ENCODE measurements at regions of chr14 and their contacts with region 1.

Region 1: DNA sequence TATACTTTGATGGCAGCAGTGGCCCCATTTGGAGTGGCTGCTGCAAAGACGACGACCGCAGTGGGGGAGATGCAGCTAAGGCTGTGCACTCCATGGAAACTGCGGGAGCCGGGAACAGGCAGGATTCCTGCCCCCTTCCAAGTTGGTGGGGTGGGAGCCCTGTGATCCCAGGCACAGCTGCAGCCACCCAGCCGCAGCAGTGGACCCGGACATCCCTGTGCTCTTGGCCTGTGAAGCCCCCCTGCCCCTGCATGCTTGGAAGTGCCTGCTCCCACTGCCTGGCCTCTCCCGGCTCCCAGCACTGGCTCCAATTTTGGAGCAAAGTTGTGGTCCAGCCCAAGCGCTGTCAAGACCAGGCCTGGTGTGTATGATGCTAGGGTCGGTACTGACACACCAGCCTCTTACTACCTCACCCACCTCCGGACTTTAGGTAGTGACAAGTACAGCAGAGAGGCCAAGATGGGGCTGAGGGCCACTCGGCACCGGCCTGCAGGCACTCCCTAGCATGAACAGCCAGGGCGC is 502.8 kb upstream of the RPL10L start:
- DNase-seq: no peak
- H3K4me3 Mint-ChIP-seq: no peak overlapping the region
- H3K27ac Mint-ChIP-seq: no peak overlapping the region
- H3K4me1 Mint-ChIP-seq: no peaks in the 10 kb centered on the region
- H3K27me3 Mint-ChIP-seq: peaks cover 27% of the 10 kb centered on the region
- CTCF ChIP-seq: no peak

Region 2: GRCh38 chr14:47120645-47121044 is 33.7 kb before region 1 on chr14:
- CTCF ChIA-PET with region 1: no interaction called
- POLR2A ChIA-PET with region 1: no interaction called
- intact Hi-C with region 1: no loop called
- DNase-seq: no peak
- H3K4me3 Mint-ChIP-seq: no peak overlapping the region
- H3K27ac Mint-ChIP-seq: no peak overlapping the region
- H3K4me1 Mint-ChIP-seq: no peaks in the 10 kb centered on the region
- H3K27me3 Mint-ChIP-seq: no peaks in the 10 kb centered on the region
- CTCF ChIP-seq: no peak

Region 3: GRCh38 chr14:47235619-47236018 is 81.3 kb after region 1 on chr14:
- CTCF ChIA-PET with region 1: interaction called, 3 read pairs
- POLR2A ChIA-PET with region 1: no interaction called
- intact Hi-C with region 1: loop called (anchors 5 kb)
- DNase-seq: no peak
- H3K4me3 Mint-ChIP-seq: no peak overlapping the region
- H3K27ac Mint-ChIP-seq: no peak overlapping the region
- H3K4me1 Mint-ChIP-seq: no peaks in the 10 kb centered on the region
- H3K27me3 Mint-ChIP-seq: peaks cover 62% of the 10 kb centered on the region
- CTCF ChIP-seq: no peak

Measured in MCF 10A (cell line).